Heart left ventricle (tissue), 16 donors: ENCODE measurements at regions of chr21 and their contacts with region 1.

Region 1: GRCh38 chr21:29053011-29053553 is 20.4 kb downstream of the CCT8 start:
- DNase-seq: no peak
- ATAC-seq: no peak
- H3K4me3 ChIP-seq: no peak overlapping the region
- H3K27ac ChIP-seq: no peak overlapping the region
- H3K4me1 ChIP-seq: no peaks in the 10 kb centered on the region
- H3K27me3 ChIP-seq: no peaks in the 10 kb centered on the region
- CTCF ChIP-seq: no peak
- POLR2A ChIP-seq: no peak

Region 2: GRCh38 chr21:28943631-28944030 is 109.5 kb before region 1 on chr21:
- intact Hi-C with region 1: loop called in 1 of 10 experiments (anchors 10 kb)
- DNase-seq: no peak
- ATAC-seq: no peak
- H3K4me3 ChIP-seq: no peak overlapping the region
- H3K27ac ChIP-seq: no peak overlapping the region
- H3K4me1 ChIP-seq: peaks cover 0 to 8% (median 0%) of the 10 kb centered on the region in 12 donors
- H3K27me3 ChIP-seq: no peaks in the 10 kb centered on the region
- CTCF ChIP-seq: no peak
- POLR2A ChIP-seq: no peak